ENCODE measurements at regions of chr5 and their contacts with region 1.

Region 1: DNA sequence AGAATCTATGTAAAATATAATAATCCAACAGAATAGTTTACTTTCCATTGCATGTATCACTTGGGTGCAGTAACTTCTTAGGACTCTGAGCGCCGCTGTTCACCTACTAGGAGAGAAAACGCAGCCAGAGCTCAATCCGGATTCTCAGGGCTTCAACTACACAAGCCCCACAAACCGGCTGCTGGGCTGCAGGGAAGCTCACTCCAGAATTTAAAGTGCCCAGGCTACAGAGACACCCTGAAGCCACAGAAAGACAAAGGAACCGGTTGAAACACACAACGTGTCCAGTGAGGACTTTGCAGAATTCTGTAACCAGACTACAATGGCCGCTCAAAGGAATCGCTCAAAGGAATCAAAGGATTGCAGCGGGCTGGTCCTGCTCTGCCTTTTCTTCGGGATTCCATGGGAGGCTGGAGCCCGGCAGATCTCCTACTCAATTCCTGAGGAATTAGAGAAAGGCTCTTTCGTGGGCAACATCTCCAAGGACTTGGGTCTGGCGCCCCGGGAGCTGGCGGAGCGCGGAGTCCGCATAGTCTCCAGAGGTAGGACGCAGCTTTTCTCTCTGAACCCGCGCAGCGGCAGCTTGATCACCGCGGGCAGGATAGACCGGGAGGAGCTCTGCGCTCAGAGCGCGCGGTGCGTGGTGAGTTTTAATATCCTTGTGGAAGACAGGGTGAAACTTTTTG is at the start of gene PCDHGA10:
- DNase-seq: peak; percentile 78
- ATAC-seq: peak; percentile 43
- H3K4me3 Mint-ChIP-seq: peak within 1 kb of the TSS; percentile 94
- H3K27ac Mint-ChIP-seq: peak within 1 kb of the TSS; percentile 51
- H3K4me1 Mint-ChIP-seq: peaks cover 27% of the 10 kb centered on the region
- H3K27me3 Mint-ChIP-seq: peaks cover 28% of the 10 kb centered on the region
- CTCF ChIP-seq: peak; percentile 71
- total RNA-seq, gene PCDHGA10: 10.7 to 11.9 TPM (median 11.0 TPM) in 3 replicates

Region 2: DNA sequence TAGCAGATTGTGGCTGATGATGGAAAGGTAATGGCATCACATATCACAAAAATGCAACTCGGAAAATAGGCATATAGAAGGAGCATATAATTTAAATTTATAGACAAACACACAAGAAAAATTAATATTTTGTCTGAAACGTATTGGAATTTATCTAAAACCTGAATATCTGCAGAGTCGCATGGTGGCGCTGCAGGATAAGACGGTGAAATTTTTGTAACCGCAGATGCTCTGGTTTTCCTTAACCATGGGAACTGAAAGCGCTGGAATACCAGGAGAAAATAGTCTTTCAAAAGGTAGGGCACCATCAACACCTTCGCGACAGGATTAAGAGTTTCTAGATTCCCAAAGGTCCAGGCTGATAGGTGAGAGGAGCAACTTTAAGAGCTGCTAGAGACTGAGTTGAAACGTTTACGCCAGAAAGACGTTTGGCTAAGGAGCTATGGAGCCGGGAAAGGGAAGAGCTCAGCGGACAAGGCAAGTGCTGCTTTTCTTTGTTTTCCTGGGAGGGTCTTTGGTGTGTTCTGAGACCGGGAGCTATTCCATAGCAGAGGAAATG is 178.8 kb before region 1 on chr5:
- CTCF ChIA-PET with region 1: interaction called, 15 read pairs
- POLR2A ChIA-PET with region 1: no interaction called
- DNase-seq: peak; percentile 47
- ATAC-seq: peak; percentile 64
- H3K4me3 Mint-ChIP-seq: peak overlapping the region; percentile 69
- H3K27ac Mint-ChIP-seq: no peak overlapping the region
- H3K4me1 Mint-ChIP-seq: peaks cover 5% of the 10 kb centered on the region
- H3K27me3 Mint-ChIP-seq: peaks cover 3% of the 10 kb centered on the region; the same call in 1 of the 2 replicates
- CTCF ChIP-seq: peak; percentile 45

Region 3: GRCh38 chr5:141349917-141350619 is 62.9 kb before region 1 on chr5 and contains the start of gene PCDHGB1:
- CTCF ChIA-PET with region 1: interaction called, 15 read pairs
- POLR2A ChIA-PET with region 1: no interaction called
- DNase-seq: peak; percentile 86
- ATAC-seq: peak; percentile 96
- H3K4me3 Mint-ChIP-seq: peak within 1 kb of the TSS; percentile 72
- H3K27ac Mint-ChIP-seq: peak within 1 kb of the TSS; percentile 47; the same call in 1 of the 2 replicates
- H3K4me1 Mint-ChIP-seq: peaks cover 2% of the 10 kb centered on the region
- H3K27me3 Mint-ChIP-seq: peaks cover 3% of the 10 kb centered on the region
- CTCF ChIP-seq: peak; percentile 50
- total RNA-seq, gene PCDHGB1: 4.9 to 5.6 TPM (median 5.5 TPM) in 3 replicates

Region 4: DNA sequence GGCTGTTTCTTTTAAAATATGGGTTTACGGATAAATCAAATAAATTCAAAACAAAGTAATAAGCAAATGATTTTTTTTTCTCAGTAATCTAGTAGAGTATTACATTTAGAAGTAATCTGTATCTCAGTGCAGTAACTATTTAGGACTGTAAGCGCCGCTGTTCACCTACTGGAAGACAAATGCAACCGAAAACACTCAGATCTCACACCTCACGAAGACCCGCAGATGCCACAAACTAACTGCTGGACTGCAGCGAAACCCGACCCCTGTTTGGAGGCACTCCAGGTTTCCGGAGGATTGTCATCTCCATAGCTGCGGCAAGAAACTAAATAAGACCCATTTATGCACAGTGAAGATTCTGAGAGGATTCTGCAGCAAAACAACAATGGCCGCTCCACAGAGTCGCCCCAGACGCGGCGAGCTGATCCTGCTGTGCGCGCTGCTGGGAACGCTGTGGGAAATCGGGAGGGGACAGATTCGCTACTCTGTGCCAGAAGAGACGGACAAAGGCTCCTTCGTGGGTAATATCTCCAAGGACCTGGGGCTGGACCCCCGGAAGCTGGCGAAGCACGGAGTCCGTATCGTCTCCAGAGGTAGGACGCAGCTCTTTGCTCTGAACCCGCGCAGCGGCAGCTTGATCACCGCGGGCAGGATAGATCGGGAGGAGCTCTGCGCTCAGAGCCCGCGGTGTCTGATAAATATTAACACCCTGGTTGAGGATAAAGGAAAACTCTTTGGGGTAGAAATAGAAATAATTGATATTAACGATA is 20.4 kb before region 1 on chr5 and contains the start of gene PCDHGA8:
- CTCF ChIA-PET with region 1: interaction called, 38 read pairs
- POLR2A ChIA-PET with region 1: no interaction called
- DNase-seq: no peak
- ATAC-seq: no peak
- H3K4me3 Mint-ChIP-seq: no peak within 1 kb of the TSS
- H3K27ac Mint-ChIP-seq: no peak within 1 kb of the TSS
- H3K4me1 Mint-ChIP-seq: 0 out of 2 replicates have a peak, but pooled peaks cover 3% of the 10 kb centered on the region
- H3K27me3 Mint-ChIP-seq: peaks cover 23% of the 10 kb centered on the region
- CTCF ChIP-seq: no peak
- total RNA-seq, gene PCDHGA8: 1.4 to 2.4 TPM (median 2.1 TPM) in 3 replicates

Region 5: GRCh38 chr5:141484641-141485311 is 71.8 kb after region 1 on chr5 and contains the start of gene PCDHGC4:
- CTCF ChIA-PET with region 1: interaction called, 22 read pairs
- POLR2A ChIA-PET with region 1: interaction called, 3 read pairs
- DNase-seq: peak; percentile 84
- ATAC-seq: peak; percentile 89
- H3K4me3 Mint-ChIP-seq: peak within 1 kb of the TSS; percentile 71
- H3K27ac Mint-ChIP-seq: peak within 1 kb of the TSS; percentile 90
- H3K4me1 Mint-ChIP-seq: peaks cover 60% of the 10 kb centered on the region
- H3K27me3 Mint-ChIP-seq: peaks cover 33% of the 10 kb centered on the region
- CTCF ChIP-seq: no peak
- total RNA-seq, gene PCDHGC4: 4.5 to 6.1 TPM (median 5.1 TPM) in 3 replicates

Region 6: GRCh38 chr5:141557681-141558136 is 144.7 kb after region 1 on chr5:
- CTCF ChIA-PET with region 1: interaction called, 60 read pairs
- POLR2A ChIA-PET with region 1: interaction called, 11 read pairs
- DNase-seq: peak; percentile 85
- ATAC-seq: peak; percentile 57
- H3K4me3 Mint-ChIP-seq: peak overlapping the region; percentile 61
- H3K27ac Mint-ChIP-seq: peak overlapping the region; percentile 97
- H3K4me1 Mint-ChIP-seq: peaks cover 38% of the 10 kb centered on the region
- H3K27me3 Mint-ChIP-seq: no peaks in the 10 kb centered on the region
- CTCF ChIP-seq: peak; percentile 92

Region 7: DNA sequence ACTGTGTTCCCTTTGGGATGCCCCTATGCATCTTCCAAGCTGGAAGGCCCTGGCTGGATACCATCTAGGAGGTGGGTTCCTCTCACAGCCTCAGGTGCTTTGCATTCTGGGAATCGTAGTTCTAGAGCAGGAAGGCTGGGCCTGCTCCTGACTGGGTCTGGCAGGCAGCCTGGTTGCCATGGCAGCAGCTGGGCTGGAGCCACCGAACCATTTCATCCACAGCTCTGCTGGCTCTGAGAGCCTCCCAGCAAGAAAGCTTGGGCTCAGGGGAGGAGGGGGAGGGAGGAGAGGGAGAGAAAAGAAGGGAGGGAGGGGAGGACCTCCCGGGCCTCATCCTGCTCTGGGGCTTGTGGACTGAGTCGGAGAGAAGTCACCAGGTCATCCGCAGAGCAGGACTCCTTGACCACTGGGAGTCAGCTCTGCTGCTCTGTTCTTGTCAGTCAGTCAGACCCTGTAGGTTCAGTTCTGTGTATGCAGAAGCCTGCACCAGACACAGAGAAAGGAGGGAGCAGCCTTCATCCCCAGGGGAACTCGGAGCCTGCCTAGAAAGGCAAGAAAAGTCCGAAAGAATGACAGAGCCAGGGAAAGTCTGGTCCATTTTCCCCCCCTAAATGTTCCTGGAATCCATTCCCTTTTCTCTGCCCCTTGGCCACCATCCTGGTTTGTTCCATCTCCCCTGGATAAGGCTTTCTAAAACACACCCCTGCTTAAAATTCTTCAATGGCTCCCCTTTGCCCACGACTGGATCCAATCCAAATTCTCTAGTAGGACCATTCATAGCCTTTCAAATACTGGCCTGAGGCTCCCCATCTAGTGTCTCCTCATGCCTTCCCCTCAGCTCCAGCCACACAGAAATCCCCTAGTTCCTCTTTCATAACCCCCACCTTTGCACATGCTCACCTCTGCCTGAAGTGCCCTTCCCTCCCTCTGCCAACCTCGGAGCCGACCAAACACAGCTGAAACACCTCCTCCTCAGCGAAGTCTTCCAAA is 334.4 kb after region 1 on chr5:
- CTCF ChIA-PET with region 1: no interaction called
- POLR2A ChIA-PET with region 1: no interaction called
- DNase-seq: peak; percentile 90
- ATAC-seq: peak; percentile 96
- H3K4me3 Mint-ChIP-seq: no peak overlapping the region
- H3K27ac Mint-ChIP-seq: no peak overlapping the region
- H3K4me1 Mint-ChIP-seq: peaks cover 16% of the 10 kb centered on the region
- H3K27me3 Mint-ChIP-seq: peaks cover 32% of the 10 kb centered on the region
- CTCF ChIP-seq: no peak